ENCODE measurements at regions of chr11 and their contacts with region 1.

Region 1: GRCh38 chr11:123330071-123330470 is 100.0 kb upstream of the GRAMD1B start:
- DNase-seq: no peak
- CTCF ChIP-seq: no peak

Region 2: GRCh38 chr11:123344790-123345357 is 14.8 kb after region 1 on chr11:
- CTCF ChIA-PET with region 1: interaction called, 14 read pairs
- POLR2A ChIA-PET with region 1: no interaction called
- DNase-seq: no peak
- CTCF ChIP-seq: no peak